WTC11 (cell line): ENCODE measurements at regions of chr1 and their contacts with region 1.

Region 1: DNA sequence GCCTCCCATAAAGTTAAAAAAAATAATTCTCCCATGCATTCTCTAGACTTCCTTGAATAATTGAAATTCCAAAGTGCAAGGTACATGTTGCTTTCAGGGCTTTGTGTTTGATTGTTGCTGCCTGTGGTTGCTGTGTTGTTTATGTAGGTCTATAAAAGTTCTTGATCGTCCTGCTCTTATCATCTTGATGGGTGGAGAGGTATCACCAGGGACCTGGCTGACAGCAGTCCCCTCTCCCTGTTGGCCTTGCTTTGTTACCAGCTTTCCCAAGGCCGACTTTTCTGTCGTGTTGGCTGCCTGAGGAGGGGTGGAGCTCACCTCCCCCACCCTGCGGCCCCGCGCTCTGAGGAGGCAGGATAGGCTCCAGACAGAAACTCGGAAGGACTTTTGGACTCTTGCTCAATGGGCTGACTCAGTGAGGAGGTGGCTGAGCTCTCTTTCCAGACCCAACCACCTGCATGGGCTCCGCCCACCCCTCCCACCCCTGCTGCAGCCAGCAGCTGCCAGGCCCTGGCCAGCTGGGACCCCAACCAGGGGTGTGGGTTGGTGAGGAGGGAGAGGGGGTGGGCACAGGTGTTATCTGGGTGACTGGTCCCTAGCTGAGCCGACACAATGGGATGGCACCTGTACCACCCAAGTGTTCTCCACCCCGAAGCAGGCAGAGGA is 2.0 kb downstream of the INAVA start:
- DNase-seq: no peak
- ATAC-seq: no peak; the same call in 1 of the 2 replicates
- H3K4me3 Mint-ChIP-seq: peak overlapping the region; percentile 36; the same call in 1 of the 2 replicates
- H3K27ac Mint-ChIP-seq: peak overlapping the region; percentile 86
- H3K4me1 Mint-ChIP-seq: peaks cover 61% of the 10 kb centered on the region
- H3K27me3 Mint-ChIP-seq: no peaks in the 10 kb centered on the region
- CTCF ChIP-seq: no peak

Region 2: GRCh38 chr1:200811704-200812103 is 85.0 kb before region 1 on chr1:
- CTCF ChIA-PET with region 1: no interaction called
- POLR2A ChIA-PET with region 1: no interaction called
- DNase-seq: no peak
- ATAC-seq: no peak
- H3K4me3 Mint-ChIP-seq: no peak overlapping the region
- H3K27ac Mint-ChIP-seq: no peak overlapping the region
- H3K4me1 Mint-ChIP-seq: no peaks in the 10 kb centered on the region
- H3K27me3 Mint-ChIP-seq: no peaks in the 10 kb centered on the region
- CTCF ChIP-seq: no peak

Region 3: GRCh38 chr1:200917291-200917817 is 20.7 kb after region 1 on chr1:
- CTCF ChIA-PET with region 1: interaction called, 14 read pairs
- POLR2A ChIA-PET with region 1: no interaction called
- DNase-seq: no peak
- ATAC-seq: no peak
- H3K4me3 Mint-ChIP-seq: no peak overlapping the region
- H3K27ac Mint-ChIP-seq: no peak overlapping the region
- H3K4me1 Mint-ChIP-seq: peaks cover 5% of the 10 kb centered on the region; the same call in 1 of the 2 replicates
- H3K27me3 Mint-ChIP-seq: no peaks in the 10 kb centered on the region
- CTCF ChIP-seq: no peak